Dorsolateral prefrontal cortex (tissue), 120 donors: ENCODE measurements at regions of chr20 and their contacts with region 1.

Region 1: GRCh38 chr20:6074145-6074561 is 20.3 kb upstream of the LRRN4 start:
- DNase-seq: no peak
- H3K4me3 ChIP-seq: no peak overlapping the region
- H3K27ac ChIP-seq: no peak overlapping the region
- H3K27me3 ChIP-seq: peaks cover 0 to 7% (median 0%) of the 10 kb centered on the region in 45 donors
- CTCF ChIP-seq: peak in 6 of 56 donors; percentile 14 to 33 (median 23)

Region 2: GRCh38 chr20:5529331-5530148 is 544.6 kb before region 1 on chr20:
- intact Hi-C with region 1: loop called (anchors 1 to 5 kb)
- DNase-seq: peak; percentile 66 to 89 (median 84)
- H3K4me3 ChIP-seq: peak overlapping the region in 37 of 59 donors; percentile 0 to 52 (median 26)
- H3K27ac ChIP-seq: peak overlapping the region in 7 of 59 donors; percentile 1 to 70 (median 29)
- H3K27me3 ChIP-seq: no peaks in the 10 kb centered on the region
- CTCF ChIP-seq: peak; percentile 45 to 93 (median 77)

Region 3: DNA sequence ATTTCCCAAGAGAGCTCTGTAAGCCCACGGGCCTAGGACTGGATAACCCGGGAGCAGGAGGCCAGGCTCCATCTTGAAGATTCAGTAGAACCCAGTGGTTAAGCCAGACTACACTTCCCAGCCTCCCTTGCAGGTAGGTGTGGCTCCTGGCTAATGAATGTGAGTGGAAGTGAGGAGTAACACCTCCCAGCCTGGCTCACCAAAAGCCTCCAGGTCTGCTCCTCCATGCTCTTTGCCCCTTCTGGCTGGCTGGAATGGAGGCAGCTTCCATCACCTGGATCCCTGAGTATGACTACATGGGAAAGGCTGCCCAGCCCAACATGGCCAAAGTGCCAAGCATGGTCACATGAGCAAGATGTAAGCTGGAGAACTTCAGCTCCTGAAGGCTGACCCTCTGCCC is 30.0 kb before region 1 on chr20:
- intact Hi-C with region 1: no loop called
- DNase-seq: no peak
- H3K4me3 ChIP-seq: no peak overlapping the region
- H3K27ac ChIP-seq: no peak overlapping the region
- H3K27me3 ChIP-seq: no peaks in the 10 kb centered on the region
- CTCF ChIP-seq: no peak